ENCODE measurements at regions of chr16 and their contacts with region 1.

Region 1: GRCh38 chr16:57386381-57386951 is 14.2 kb downstream of the CX3CL1 start:
- DNase-seq: no peak
- ATAC-seq: no peak
- H3K4me3 ChIP-seq: no peak overlapping the region
- H3K27ac ChIP-seq: no peak overlapping the region
- H3K4me1 ChIP-seq: peaks cover 51% of the 10 kb centered on the region
- H3K27me3 ChIP-seq: no peaks in the 10 kb centered on the region
- CTCF ChIP-seq: no peak
- EP300 ChIP-seq: no peak
- POLR2A ChIP-seq: no peak
- RAD21 ChIP-seq: no peak

Region 2: DNA sequence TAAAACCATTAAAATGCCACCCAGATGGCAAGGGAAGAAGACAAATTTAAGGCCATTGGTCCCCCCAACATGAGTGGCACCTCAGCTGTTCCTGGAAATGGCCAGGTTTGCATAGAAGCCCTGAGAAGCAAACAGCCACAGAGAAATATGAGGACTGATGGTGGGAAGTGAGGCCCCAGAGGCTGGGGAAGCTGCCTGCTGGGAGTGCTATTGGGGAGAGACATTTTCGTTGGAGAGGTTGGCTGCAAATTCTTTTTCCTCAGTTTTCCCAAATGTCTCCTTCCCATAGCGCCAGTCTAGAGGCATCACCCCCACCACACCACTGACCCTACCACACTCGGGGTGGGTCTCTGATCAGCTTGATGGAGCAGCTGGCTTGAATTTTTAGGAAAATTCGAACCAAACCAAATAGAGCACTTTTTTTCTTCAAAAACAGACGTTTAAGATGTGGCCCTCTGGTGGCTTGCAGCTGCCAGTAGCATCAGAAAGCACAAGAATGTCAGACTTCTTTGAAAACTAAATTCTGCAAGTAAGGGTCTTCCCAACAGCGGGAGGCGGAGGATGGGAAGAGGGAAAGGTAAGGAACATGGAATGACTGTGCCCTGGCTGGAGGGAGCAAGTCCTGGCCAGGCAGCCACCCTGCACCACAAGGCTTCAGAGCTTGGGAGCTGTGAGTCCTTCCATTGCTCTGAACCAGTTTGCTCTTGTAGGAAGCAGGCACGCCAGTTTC is 534.6 kb before region 1 on chr16:
- CTCF ChIA-PET with region 1: no interaction called
- POLR2A ChIA-PET with region 1: no interaction called
- RAD21 ChIA-PET with region 1: no interaction called
- SMC1A ChIA-PET with region 1: no interaction called
- in situ Hi-C with region 1: no loop called
- intact Hi-C with region 1: no loop called
- DNase-seq: no peak
- ATAC-seq: no peak
- H3K4me3 ChIP-seq: no peak overlapping the region
- H3K27ac ChIP-seq: no peak overlapping the region
- H3K4me1 ChIP-seq: peaks cover 9% of the 10 kb centered on the region; the same call in 1 of the 2 replicates
- H3K27me3 ChIP-seq: no peaks in the 10 kb centered on the region
- CTCF ChIP-seq: peak; percentile 20 to 52 (median 51); a peak in 5 of 6 replicates
- EP300 ChIP-seq: no peak
- POLR2A ChIP-seq: no peak
- RAD21 ChIP-seq: no peak

Region 3: DNA sequence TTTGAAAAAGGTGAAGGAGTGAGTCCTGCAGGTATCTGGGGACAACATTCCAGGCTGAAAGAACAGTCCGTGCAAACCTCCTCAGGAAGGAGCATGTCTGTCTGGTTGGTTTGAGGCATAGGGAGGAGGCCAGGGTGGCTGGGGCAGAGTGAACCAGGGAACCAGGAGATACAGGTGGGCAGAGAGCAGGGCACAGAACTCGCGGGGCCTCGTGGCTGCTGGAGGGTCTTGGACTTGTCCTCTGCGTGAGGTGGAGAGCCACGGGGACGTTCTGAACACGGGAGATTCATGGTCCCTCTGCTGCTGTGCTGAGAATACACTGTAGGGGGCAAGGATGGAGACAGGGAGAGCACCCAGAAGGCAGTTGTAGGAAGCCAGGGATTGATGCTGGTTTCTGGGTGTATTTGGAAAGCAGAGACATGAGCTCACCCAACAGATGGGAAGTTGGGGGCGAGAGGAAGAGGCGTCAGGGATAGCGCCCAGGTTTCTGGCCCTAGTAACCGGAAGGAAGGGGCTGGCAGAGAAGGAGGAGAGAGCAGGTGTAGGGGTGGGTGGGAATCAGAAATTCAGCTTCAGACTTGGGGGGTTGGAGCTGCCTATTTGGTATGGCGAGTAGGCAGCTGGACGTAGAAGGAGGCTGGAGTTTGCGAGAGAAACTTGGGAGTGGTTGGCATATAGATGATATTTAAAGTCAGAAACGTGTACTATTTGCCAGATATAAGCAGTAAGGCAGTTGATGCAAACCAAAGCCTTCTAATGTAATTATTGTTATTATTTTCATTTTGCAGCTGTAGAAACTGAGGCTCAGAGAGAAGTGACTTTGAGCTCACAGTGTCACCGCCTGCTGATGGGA is 17.7 kb after region 1 on chr16 and contains the start of gene CCL17:
- CTCF ChIA-PET with region 1: interaction called, 4 read pairs
- POLR2A ChIA-PET with region 1: interaction called, 10 read pairs
- RAD21 ChIA-PET with region 1: interaction called, 5 read pairs
- SMC1A ChIA-PET with region 1: interaction called, 8 read pairs
- in situ Hi-C with region 1: no loop called
- intact Hi-C with region 1: no loop called
- DNase-seq: no peak
- ATAC-seq: no peak
- H3K4me3 ChIP-seq: no peak within 1 kb of the TSS
- H3K27ac ChIP-seq: no peak within 1 kb of the TSS
- H3K4me1 ChIP-seq: peaks cover 7% of the 10 kb centered on the region
- H3K27me3 ChIP-seq: no peaks in the 10 kb centered on the region
- CTCF ChIP-seq: 0 out of 6 replicates have a peak, but pooled peaks of 1 of the 3 experiments have one; percentile 3
- EP300 ChIP-seq: no peak
- POLR2A ChIP-seq: no peak
- RAD21 ChIP-seq: no peak
- polyA plus RNA-seq, gene CCL17: 26.4 to 31.2 TPM

Region 4: GRCh38 chr16:57427824-57428223 is 41.4 kb after region 1 on chr16:
- CTCF ChIA-PET with region 1: no interaction called
- POLR2A ChIA-PET with region 1: no interaction called
- RAD21 ChIA-PET with region 1: no interaction called
- SMC1A ChIA-PET with region 1: no interaction called
- in situ Hi-C with region 1: no loop called
- intact Hi-C with region 1: no loop called
- DNase-seq: no peak
- ATAC-seq: no peak
- H3K4me3 ChIP-seq: no peak overlapping the region
- H3K27ac ChIP-seq: no peak overlapping the region
- H3K4me1 ChIP-seq: no peaks in the 10 kb centered on the region
- H3K27me3 ChIP-seq: no peaks in the 10 kb centered on the region
- CTCF ChIP-seq: no peak
- EP300 ChIP-seq: no peak
- POLR2A ChIP-seq: no peak
- RAD21 ChIP-seq: no peak